K562 (cell line): ENCODE measurements at regions of chr6 and their contacts with region 1.

Region 1: GRCh38 chr6:15691250-15691869 is 28.5 kb upstream of the DTNBP1 start:
- DNase-seq: peak; percentile 90 to 95 (median 92)
- ATAC-seq: peak; percentile 100
- H3K4me3 ChIP-seq: no peak overlapping the region
- H3K27ac ChIP-seq: no peak overlapping the region
- H3K4me1 ChIP-seq: peaks cover 0 to 11% of the 10 kb centered on the region in 2 experiments; a peak in 2 of 5 replicates
- H3K27me3 ChIP-seq: no peaks in the 10 kb centered on the region
- CTCF ChIP-seq: peak; percentile 100
- EP300 ChIP-seq: peak; percentile 39; the same call in 1 of the 2 replicates
- POLR2A ChIP-seq: no peak
- RAD21 ChIP-seq: peak; percentile 100

Region 2: DNA sequence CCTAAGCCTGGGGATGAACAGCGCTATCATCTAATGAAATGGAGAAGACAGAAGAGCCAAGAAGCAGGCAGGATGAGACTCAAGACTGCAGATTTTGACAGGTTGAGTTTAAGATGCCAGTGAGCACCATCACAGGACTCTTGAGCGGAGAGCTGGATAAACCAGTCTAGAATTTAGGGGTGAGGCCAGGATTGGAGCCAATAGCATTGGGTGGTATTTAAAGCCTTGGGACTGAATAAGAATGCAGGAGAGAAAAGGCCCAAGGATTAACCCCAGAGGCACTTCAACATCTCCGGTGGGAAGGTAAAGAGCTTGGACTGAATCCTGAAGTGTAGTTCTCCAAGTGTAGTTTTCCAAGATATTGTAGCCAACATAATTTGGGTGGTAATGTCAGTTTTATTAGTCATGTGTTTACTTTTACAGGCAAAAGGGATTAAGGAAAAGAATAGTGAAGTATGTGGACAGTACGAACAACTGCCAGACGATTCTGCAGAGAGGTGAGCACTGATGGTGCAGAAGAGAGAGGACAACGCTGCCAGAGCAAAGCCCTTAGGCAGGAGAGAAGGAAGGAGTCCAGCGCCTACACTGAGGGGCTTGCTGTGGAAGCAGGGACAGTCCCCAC is 113.7 kb before region 1 on chr6:
- CTCF ChIA-PET with region 1: no interaction called
- POLR2A ChIA-PET with region 1: no interaction called
- in situ Hi-C with region 1: no loop called
- intact Hi-C with region 1: no loop called
- DNase-seq: no peak
- ATAC-seq: no peak
- H3K4me3 ChIP-seq: no peak overlapping the region
- H3K27ac ChIP-seq: no peak overlapping the region
- H3K4me1 ChIP-seq: peaks cover 3 to 27% of the 10 kb centered on the region in 2 experiments; a peak in 4 of 5 replicates
- H3K27me3 ChIP-seq: no peaks in the 10 kb centered on the region
- CTCF ChIP-seq: no peak
- EP300 ChIP-seq: no peak
- POLR2A ChIP-seq: no peak
- RAD21 ChIP-seq: no peak

Region 3: DNA sequence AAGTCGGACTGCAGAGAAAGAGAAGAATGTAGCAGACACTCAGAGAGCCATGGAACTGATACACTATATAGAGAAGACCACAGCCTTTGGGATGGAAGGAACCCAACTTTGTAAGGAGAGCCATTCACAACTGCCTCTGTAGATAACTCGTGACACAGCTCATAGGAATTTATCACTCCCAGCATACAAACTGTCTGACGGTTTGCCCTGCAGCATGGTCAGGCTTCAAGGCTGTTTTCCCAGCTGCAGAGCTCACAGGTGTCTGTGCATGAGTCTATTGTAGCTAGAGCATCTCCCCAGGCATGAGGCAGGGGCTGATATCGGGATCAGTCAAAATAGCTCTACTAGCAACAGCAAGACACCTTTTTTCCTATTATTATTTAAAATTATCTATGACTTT is 101.9 kb after region 1 on chr6:
- CTCF ChIA-PET with region 1: no interaction called
- POLR2A ChIA-PET with region 1: no interaction called
- in situ Hi-C with region 1: no loop called
- intact Hi-C with region 1: loop called (anchors 5 kb)
- DNase-seq: peak; percentile 33 to 89 (median 56)
- ATAC-seq: peak; percentile 92
- H3K4me3 ChIP-seq: no peak overlapping the region
- H3K27ac ChIP-seq: peak overlapping the region; percentile 50; the same call in 2 of the 3 replicates
- H3K4me1 ChIP-seq: peaks cover 8 to 29% of the 10 kb centered on the region in 2 experiments
- H3K27me3 ChIP-seq: no peaks in the 10 kb centered on the region
- CTCF ChIP-seq: no peak
- EP300 ChIP-seq: peak; percentile 87
- POLR2A ChIP-seq: no peak
- RAD21 ChIP-seq: no peak; a peak in 1 of 4 replicates

Region 4: GRCh38 chr6:16031278-16031981 is 340.1 kb after region 1 on chr6:
- CTCF ChIA-PET with region 1: no interaction called
- POLR2A ChIA-PET with region 1: no interaction called
- in situ Hi-C with region 1: no loop called
- intact Hi-C with region 1: loop called (anchors 10 kb)
- DNase-seq: peak; percentile 93 to 98 (median 94)
- ATAC-seq: peak; percentile 97
- H3K4me3 ChIP-seq: no peak overlapping the region
- H3K27ac ChIP-seq: peak overlapping the region; percentile 83
- H3K4me1 ChIP-seq: peaks cover 10 to 33% of the 10 kb centered on the region in 2 experiments
- H3K27me3 ChIP-seq: no peaks in the 10 kb centered on the region
- CTCF ChIP-seq: no peak; a peak in 1 of 6 replicates
- EP300 ChIP-seq: peak; percentile 100
- POLR2A ChIP-seq: no peak
- RAD21 ChIP-seq: peak; percentile 38 to 62

Region 5: GRCh38 chr6:16183187-16183664 is 491.9 kb after region 1 on chr6:
- CTCF ChIA-PET with region 1: interaction called, 33 read pairs
- POLR2A ChIA-PET with region 1: no interaction called
- in situ Hi-C with region 1: loop called (anchors 10 kb)
- intact Hi-C with region 1: loop called (anchors 1 kb)
- DNase-seq: peak; percentile 58 to 70 (median 60)
- ATAC-seq: peak; percentile 75
- H3K4me3 ChIP-seq: no peak overlapping the region
- H3K27ac ChIP-seq: peak overlapping the region; percentile 28; the same call in 2 of the 3 replicates
- H3K4me1 ChIP-seq: peaks cover 0 to 8% of the 10 kb centered on the region in 2 experiments; a peak in 2 of 5 replicates
- H3K27me3 ChIP-seq: no peaks in the 10 kb centered on the region
- CTCF ChIP-seq: peak; percentile 68 to 90 (median 80); a peak in 5 of 6 replicates
- EP300 ChIP-seq: no peak; the same call in 1 of the 2 replicates
- POLR2A ChIP-seq: no peak
- RAD21 ChIP-seq: peak; percentile 86 to 89

Region 6: GRCh38 chr6:16277101-16277981 is 586.0 kb after region 1 on chr6:
- CTCF ChIA-PET with region 1: no interaction called
- POLR2A ChIA-PET with region 1: interaction called, 3 read pairs
- in situ Hi-C with region 1: no loop called
- intact Hi-C with region 1: loop called (anchors 10 kb)
- DNase-seq: peak; percentile 93 to 97 (median 94)
- ATAC-seq: peak; percentile 100
- H3K4me3 ChIP-seq: no peak overlapping the region
- H3K27ac ChIP-seq: peak overlapping the region; percentile 51
- H3K4me1 ChIP-seq: peaks cover 15 to 28% of the 10 kb centered on the region in 2 experiments
- H3K27me3 ChIP-seq: no peaks in the 10 kb centered on the region
- CTCF ChIP-seq: peak; percentile 92 to 98 (median 98)
- EP300 ChIP-seq: peak; percentile 64
- POLR2A ChIP-seq: no peak
- RAD21 ChIP-seq: peak; percentile 87 to 97